HepG2 (cell line): ENCODE measurements at regions of chr6 and their contacts with region 1.

Region 1: DNA sequence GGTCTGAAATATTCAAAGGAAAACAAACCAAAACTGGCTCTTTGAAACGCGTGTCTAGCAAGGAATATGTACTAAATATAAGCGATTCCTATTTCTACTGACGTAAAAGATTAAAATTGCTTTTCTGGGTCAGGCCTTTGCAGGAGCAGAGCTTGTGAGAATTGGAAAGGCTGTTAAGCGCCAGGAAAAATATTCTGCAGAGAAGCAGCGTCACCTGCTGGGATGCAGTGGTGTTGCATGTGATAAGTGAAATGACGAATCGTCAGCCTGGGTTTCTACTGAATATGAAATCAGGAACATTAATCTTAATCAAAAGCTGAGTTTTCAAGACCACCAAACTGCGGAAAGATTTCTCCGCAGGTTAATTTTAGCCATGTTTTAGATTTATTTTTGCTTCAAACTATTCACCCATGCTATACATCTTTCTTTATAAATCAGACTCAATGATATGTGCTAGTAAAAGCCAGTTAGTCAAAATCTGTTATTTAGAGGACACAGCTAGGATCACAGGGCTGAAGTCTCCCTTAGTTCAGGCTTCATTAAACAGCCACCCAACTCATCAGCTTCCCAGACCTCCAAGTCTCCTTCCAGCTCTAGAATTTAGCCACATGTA is 67.4 kb downstream of the ALDH8A1 start:
- DNase-seq: peak; percentile 43
- ATAC-seq: peak; percentile 79
- H3K4me3 ChIP-seq: no peak overlapping the region
- H3K27ac ChIP-seq: no peak overlapping the region
- H3K4me1 ChIP-seq: no peaks in the 10 kb centered on the region
- H3K27me3 ChIP-seq: no peaks in the 10 kb centered on the region
- CTCF ChIP-seq: peak; percentile 87
- EP300 ChIP-seq: no peak
- POLR2A ChIP-seq: no peak
- RAD21 ChIP-seq: peak; percentile 85

Region 2: GRCh38 chr6:134111062-134111677 is 771.4 kb before region 1 on chr6:
- CTCF ChIA-PET with region 1: interaction called, 15 read pairs
- POLR2A ChIA-PET with region 1: no interaction called
- in situ Hi-C with region 1: no loop called
- intact Hi-C with region 1: no loop called
- DNase-seq: peak; percentile 82
- ATAC-seq: peak; percentile 57
- H3K4me3 ChIP-seq: no peak overlapping the region
- H3K27ac ChIP-seq: no peak overlapping the region
- H3K4me1 ChIP-seq: no peaks in the 10 kb centered on the region
- H3K27me3 ChIP-seq: peaks cover 0 to 11% of the 10 kb centered on the region in 2 experiments; a peak in 1 of 5 replicates
- CTCF ChIP-seq: peak; percentile 88
- EP300 ChIP-seq: no peak
- POLR2A ChIP-seq: no peak
- RAD21 ChIP-seq: peak; percentile 83

Region 3: DNA sequence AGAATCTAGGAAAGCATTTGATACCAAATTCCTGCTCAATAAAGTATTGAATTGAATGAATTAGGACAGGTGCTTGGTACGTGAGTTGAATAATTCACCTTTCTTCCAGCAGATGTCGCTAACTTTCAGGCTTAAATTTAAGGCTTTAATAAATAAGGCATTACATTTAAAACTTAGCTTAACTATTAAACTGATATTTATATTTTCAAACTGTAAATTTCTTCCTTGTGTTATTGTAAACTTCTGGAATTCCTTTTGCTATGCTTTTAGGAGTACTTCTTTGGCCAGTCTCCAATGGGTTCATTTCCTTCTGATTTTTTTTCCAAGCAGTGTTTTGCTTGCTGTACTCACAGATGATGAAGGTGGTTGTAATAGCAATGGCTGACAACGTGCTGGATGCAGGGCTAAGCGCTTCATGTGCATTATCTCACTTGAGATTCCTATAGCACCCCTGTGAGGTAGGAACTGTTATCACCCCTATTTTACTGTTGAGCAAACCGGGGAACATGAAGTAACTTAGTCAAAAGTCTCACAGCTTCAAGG is 758.8 kb before region 1 on chr6:
- CTCF ChIA-PET with region 1: interaction called, 9 read pairs
- POLR2A ChIA-PET with region 1: no interaction called
- in situ Hi-C with region 1: no loop called
- intact Hi-C with region 1: loop called (anchors 1 kb)
- DNase-seq: peak; percentile 53
- ATAC-seq: peak; percentile 83
- H3K4me3 ChIP-seq: no peak overlapping the region
- H3K27ac ChIP-seq: no peak overlapping the region
- H3K4me1 ChIP-seq: no peaks in the 10 kb centered on the region
- H3K27me3 ChIP-seq: no peaks in the 10 kb centered on the region
- CTCF ChIP-seq: peak; percentile 59
- EP300 ChIP-seq: no peak
- POLR2A ChIP-seq: no peak
- RAD21 ChIP-seq: no peak

Region 4: GRCh38 chr6:134161036-134161435 is 721.5 kb before region 1 on chr6:
- CTCF ChIA-PET with region 1: interaction called, 17 read pairs
- POLR2A ChIA-PET with region 1: no interaction called
- in situ Hi-C with region 1: no loop called
- intact Hi-C with region 1: loop called (anchors 1 kb)
- DNase-seq: no peak
- ATAC-seq: no peak
- H3K4me3 ChIP-seq: no peak overlapping the region
- H3K27ac ChIP-seq: no peak overlapping the region
- H3K4me1 ChIP-seq: no peaks in the 10 kb centered on the region
- H3K27me3 ChIP-seq: no peaks in the 10 kb centered on the region
- CTCF ChIP-seq: no peak
- EP300 ChIP-seq: no peak
- POLR2A ChIP-seq: no peak
- RAD21 ChIP-seq: no peak

Region 5: DNA sequence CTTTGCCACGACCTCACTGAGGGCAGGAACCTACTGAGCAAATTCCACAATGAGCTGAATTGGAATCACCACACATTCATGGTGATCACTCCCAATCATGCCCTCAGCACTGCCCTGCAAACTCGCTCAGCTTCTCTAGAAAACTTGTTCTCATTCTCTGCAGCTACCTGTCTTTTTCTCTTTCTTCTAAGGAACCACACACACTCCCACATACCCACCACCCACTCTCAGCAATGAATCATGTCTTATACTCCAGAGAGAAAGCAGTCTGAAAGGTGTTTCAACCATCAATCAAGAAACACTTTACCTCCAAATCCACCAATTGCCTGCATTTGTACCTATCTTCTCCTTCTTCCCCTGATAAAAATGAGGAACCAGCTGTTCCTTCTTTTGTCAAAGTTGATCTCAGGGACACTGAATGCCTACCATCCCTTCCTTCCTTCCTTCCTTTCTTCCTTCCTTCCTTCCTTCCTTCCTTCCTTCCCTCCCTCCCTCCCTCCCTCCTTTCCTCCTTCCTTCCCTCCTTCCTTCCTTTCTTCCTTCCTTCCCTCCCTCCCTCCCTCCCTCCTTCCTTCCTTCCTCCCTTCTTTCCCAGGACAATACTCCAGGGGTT is 480.1 kb before region 1 on chr6:
- CTCF ChIA-PET with region 1: no interaction called
- POLR2A ChIA-PET with region 1: no interaction called
- in situ Hi-C with region 1: no loop called
- intact Hi-C with region 1: no loop called
- DNase-seq: no peak
- ATAC-seq: no peak
- H3K4me3 ChIP-seq: no peak overlapping the region
- H3K27ac ChIP-seq: no peak overlapping the region
- H3K4me1 ChIP-seq: no peaks in the 10 kb centered on the region
- H3K27me3 ChIP-seq: no peaks in the 10 kb centered on the region
- CTCF ChIP-seq: no peak
- EP300 ChIP-seq: no peak
- POLR2A ChIP-seq: no peak
- RAD21 ChIP-seq: no peak

Region 6: GRCh38 chr6:134640975-134641429 is 241.5 kb before region 1 on chr6:
- CTCF ChIA-PET with region 1: no interaction called
- POLR2A ChIA-PET with region 1: no interaction called
- in situ Hi-C with region 1: no loop called
- intact Hi-C with region 1: loop called (anchors 2 kb)
- DNase-seq: peak; percentile 79
- ATAC-seq: peak; percentile 96
- H3K4me3 ChIP-seq: no peak overlapping the region
- H3K27ac ChIP-seq: no peak overlapping the region
- H3K4me1 ChIP-seq: 0 out of 2 replicates have a peak, but pooled peaks cover 4% of the 10 kb centered on the region
- H3K27me3 ChIP-seq: no peaks in the 10 kb centered on the region; a peak in 1 of 5 replicates
- CTCF ChIP-seq: peak; percentile 94
- EP300 ChIP-seq: no peak
- POLR2A ChIP-seq: no peak
- RAD21 ChIP-seq: peak; percentile 85; the same call in 1 of the 2 replicates

Region 7: DNA sequence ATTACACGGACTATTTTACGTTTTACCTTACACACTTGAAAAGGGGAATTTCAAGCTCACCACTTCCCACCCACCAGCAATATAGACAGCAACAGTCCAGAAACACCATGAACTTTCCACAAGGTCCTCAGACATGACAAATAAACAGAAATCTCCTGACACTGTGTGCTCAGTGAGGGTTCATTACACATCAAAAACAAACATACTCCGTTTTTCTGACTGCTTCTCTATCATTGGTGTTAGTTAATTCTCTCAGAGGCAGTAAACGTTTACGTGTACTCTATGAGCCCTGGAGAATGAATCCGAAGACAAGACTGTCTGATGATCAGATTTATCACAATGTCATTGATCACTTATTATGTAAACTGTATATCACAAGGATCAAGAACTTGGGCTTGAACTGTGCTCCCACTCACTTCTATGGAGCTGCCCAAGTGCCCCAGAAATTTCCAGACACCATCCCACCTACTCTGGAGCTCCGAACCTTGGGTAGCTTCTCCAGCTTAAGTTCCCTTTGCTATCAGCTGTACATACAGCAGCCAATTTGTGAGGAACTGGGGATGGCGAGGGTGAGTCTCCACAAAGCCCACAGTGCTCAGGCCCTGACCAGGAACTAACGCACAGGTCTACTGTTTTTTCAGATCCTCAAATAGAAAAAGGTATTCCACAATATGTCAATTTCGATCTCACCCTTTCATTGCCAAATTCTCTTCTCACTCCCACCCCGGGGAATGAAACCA is 18.6 kb before region 1 on chr6:
- CTCF ChIA-PET with region 1: no interaction called
- POLR2A ChIA-PET with region 1: no interaction called
- in situ Hi-C with region 1: no loop called
- intact Hi-C with region 1: no loop called
- DNase-seq: peak; percentile 30
- ATAC-seq: peak; percentile 95
- H3K4me3 ChIP-seq: no peak overlapping the region
- H3K27ac ChIP-seq: no peak overlapping the region
- H3K4me1 ChIP-seq: peaks cover 12% of the 10 kb centered on the region
- H3K27me3 ChIP-seq: no peaks in the 10 kb centered on the region
- CTCF ChIP-seq: no peak
- EP300 ChIP-seq: no peak
- POLR2A ChIP-seq: no peak
- RAD21 ChIP-seq: no peak

Region 8: DNA sequence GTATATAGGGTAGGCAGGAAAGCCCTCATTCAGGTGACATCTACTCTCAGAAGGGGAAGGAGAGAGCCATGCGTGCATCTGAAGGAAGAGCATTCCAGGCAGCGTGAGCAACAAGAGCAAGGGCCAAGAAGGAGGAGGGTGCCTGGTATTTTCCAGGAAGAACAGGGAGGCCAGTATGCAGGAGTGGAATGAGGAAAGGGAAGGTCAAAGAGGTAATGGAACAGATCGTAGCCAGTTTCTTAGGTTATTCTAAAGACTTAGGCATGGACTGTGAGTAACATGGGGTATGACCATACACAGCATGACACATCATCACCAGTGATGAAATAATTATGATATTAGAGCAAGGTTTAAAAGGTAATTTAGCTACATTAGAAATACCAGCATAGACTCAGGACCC is 43.3 kb after region 1 on chr6:
- CTCF ChIA-PET with region 1: no interaction called
- POLR2A ChIA-PET with region 1: no interaction called
- in situ Hi-C with region 1: no loop called
- intact Hi-C with region 1: no loop called
- DNase-seq: no peak
- ATAC-seq: no peak
- H3K4me3 ChIP-seq: no peak overlapping the region
- H3K27ac ChIP-seq: no peak overlapping the region
- H3K4me1 ChIP-seq: no peaks in the 10 kb centered on the region
- H3K27me3 ChIP-seq: no peaks in the 10 kb centered on the region
- CTCF ChIP-seq: no peak
- EP300 ChIP-seq: no peak
- POLR2A ChIP-seq: no peak
- RAD21 ChIP-seq: no peak

Region 9: GRCh38 chr6:135506270-135506997 is 623.9 kb after region 1 on chr6:
- CTCF ChIA-PET with region 1: no interaction called
- POLR2A ChIA-PET with region 1: no interaction called
- in situ Hi-C with region 1: no loop called
- intact Hi-C with region 1: loop called (anchors 5 kb)
- DNase-seq: peak; percentile 45
- ATAC-seq: peak; percentile 70
- H3K4me3 ChIP-seq: no peak overlapping the region
- H3K27ac ChIP-seq: no peak overlapping the region
- H3K4me1 ChIP-seq: peaks cover 19% of the 10 kb centered on the region
- H3K27me3 ChIP-seq: no peaks in the 10 kb centered on the region
- CTCF ChIP-seq: peak; percentile 71
- EP300 ChIP-seq: no peak
- POLR2A ChIP-seq: no peak
- RAD21 ChIP-seq: no peak